ENCODE measurements at regions of chr18 and their contacts with region 1.

Region 1: GRCh38 chr18:23377669-23378301 is 75.3 kb upstream of the RIOK3 start:
- DNase-seq: no peak
- H3K4me3 ChIP-seq: no peak overlapping the region
- H3K27ac ChIP-seq: peak overlapping the region; percentile 80
- H3K4me1 ChIP-seq: peaks cover 8 to 25% of the 10 kb centered on the region in 2 donors
- H3K27me3 ChIP-seq: no peaks in the 10 kb centered on the region
- CTCF ChIP-seq: no peak

Region 2: DNA sequence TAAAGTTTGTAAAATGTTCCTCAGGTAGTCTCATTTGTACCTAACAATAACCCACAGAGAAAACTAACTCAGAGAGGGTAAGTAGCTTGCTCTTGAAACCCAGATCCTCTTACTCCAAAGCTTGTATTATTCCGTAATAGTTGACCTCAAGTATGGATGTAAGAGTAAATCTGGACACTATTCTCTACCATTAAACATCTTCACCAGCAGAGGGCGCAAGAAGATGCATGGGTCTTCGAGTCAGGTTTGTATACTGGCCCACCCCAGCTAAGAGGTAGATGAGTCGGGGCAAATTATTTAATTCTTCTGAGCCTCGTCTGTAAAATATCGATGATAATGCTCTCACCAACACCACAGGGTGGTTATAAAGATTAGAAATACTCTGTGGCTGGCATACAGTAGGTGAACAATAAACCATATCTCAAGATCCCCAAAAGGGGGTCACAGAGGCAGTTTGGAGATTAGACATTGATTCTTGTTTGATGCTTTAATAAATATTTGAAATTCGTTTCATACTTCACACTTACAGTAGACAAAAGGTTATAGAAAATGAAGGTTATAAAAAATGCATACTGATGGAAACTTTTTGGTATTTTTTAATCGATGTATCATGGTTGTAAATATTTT is 246.0 kb before region 1 on chr18:
- intact Hi-C with region 1: loop called (anchors 2 kb)
- DNase-seq: peak in 1 of 2 donors; percentile 85
- H3K4me3 ChIP-seq: no peak overlapping the region
- H3K27ac ChIP-seq: no peak overlapping the region
- H3K4me1 ChIP-seq: peaks cover 0 to 3% of the 10 kb centered on the region in 2 donors
- H3K27me3 ChIP-seq: no peaks in the 10 kb centered on the region
- CTCF ChIP-seq: peak; percentile 74 to 82 (median 75)

Region 3: GRCh38 chr18:23532848-23533247 is 155.1 kb after region 1 on chr18:
- intact Hi-C with region 1: no loop called
- DNase-seq: no peak
- H3K4me3 ChIP-seq: no peak overlapping the region
- H3K27ac ChIP-seq: no peak overlapping the region
- H3K4me1 ChIP-seq: no peaks in the 10 kb centered on the region
- H3K27me3 ChIP-seq: no peaks in the 10 kb centered on the region
- CTCF ChIP-seq: no peak

Measured in ascending aorta (tissue), 2 donors.